ENCODE measurements at regions of chr5 and their contacts with region 1.

Region 1: GRCh38 chr5:154754460-154755360 is 467 bp upstream of the LARP1 start:
- DNase-seq: peak; percentile 97
- ATAC-seq: peak; percentile 88
- H3K4me3 Mint-ChIP-seq: peak overlapping the region; percentile 82
- H3K27ac Mint-ChIP-seq: peak overlapping the region; percentile 93
- H3K4me1 Mint-ChIP-seq: peaks cover 44% of the 10 kb centered on the region
- H3K27me3 Mint-ChIP-seq: no peaks in the 10 kb centered on the region
- CTCF ChIP-seq: no peak

Region 2: GRCh38 chr5:154038707-154039457 is 715.8 kb before region 1 on chr5 and contains the starts of genes FAM114A2 and MFAP3:
- CTCF ChIA-PET with region 1: no interaction called
- POLR2A ChIA-PET with region 1: no interaction called
- intact Hi-C with region 1: loop called (anchors 2 kb)
- DNase-seq: peak; percentile 77
- ATAC-seq: peak; percentile 98
- H3K4me3 Mint-ChIP-seq: peak within 1 kb of the TSS; percentile 97
- H3K27ac Mint-ChIP-seq: peak within 1 kb of the TSS; percentile 96
- H3K4me1 Mint-ChIP-seq: peaks cover 45% of the 10 kb centered on the region
- H3K27me3 Mint-ChIP-seq: no peaks in the 10 kb centered on the region
- CTCF ChIP-seq: no peak
- total RNA-seq, gene FAM114A2: 27.4 and 30.5 TPM in 2 replicates
- total RNA-seq, gene MFAP3: 18.4 and 20.8 TPM in 2 replicates

Region 3: DNA sequence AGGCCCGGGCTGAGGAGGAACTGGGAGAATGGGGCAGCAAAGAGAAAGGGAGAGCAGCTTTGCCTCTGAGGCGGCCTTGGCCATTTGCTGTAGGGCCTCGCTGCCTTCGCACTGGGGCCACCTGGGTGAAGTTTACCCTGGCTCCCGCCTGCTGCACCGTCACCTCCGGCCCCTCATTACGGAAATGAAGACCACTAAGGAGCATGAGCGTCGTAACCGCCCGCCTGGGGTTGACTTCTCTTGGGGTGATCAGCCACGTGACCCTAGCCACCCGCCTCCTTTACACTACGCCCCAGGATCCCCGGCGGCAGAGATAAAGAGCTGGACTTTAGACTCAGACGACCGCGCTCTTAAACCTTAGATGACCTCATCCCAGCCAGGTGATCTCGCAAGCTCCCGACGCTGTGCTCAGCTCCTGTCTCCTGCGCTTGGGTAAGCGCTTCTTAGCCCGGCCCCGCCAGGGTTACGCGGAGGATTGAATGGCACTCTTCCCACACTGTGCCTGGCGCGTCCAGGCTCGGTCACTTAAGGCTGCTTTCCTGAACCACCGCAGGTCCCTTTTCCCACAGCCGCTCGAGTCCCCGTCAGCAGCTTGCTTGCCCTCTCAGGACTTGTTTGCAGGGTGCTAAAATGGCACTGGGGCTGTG is 107.5 kb before region 1 on chr5:
- CTCF ChIA-PET with region 1: interaction called, 3 read pairs
- POLR2A ChIA-PET with region 1: no interaction called
- intact Hi-C with region 1: loop called (anchors 2 kb)
- DNase-seq: no peak
- ATAC-seq: peak; percentile 58
- H3K4me3 Mint-ChIP-seq: peak overlapping the region; percentile 87
- H3K27ac Mint-ChIP-seq: no peak overlapping the region
- H3K4me1 Mint-ChIP-seq: peaks cover 16% of the 10 kb centered on the region
- H3K27me3 Mint-ChIP-seq: peaks cover 12% of the 10 kb centered on the region
- CTCF ChIP-seq: no peak

Region 4: DNA sequence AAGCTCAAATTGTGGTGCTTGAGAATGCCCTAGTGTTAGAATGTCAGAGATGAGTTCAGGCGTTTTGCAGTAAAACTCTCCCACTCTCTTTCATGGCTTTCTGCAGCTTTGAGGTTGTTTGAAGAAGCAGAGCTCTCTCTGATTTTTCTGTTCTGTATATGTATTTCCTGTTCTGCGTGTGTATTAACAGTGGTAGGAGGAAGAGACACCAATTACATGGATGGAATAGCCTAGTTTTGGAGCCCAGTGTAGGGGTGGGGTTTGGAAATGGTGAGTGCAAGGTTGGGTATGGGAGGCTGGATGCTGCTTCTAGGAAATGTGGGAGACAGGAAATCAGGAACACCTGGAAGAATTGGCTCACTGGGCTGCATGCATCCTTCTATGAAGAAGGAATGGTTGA is 12.9 kb after region 1 on chr5:
- CTCF ChIA-PET with region 1: no interaction called
- POLR2A ChIA-PET with region 1: interaction called, 5 read pairs
- intact Hi-C with region 1: loop called (anchors 1 kb)
- DNase-seq: no peak
- ATAC-seq: peak; percentile 25
- H3K4me3 Mint-ChIP-seq: peak overlapping the region; percentile 36
- H3K27ac Mint-ChIP-seq: peak overlapping the region; percentile 37
- H3K4me1 Mint-ChIP-seq: peaks cover 76% of the 10 kb centered on the region
- H3K27me3 Mint-ChIP-seq: no peaks in the 10 kb centered on the region
- CTCF ChIP-seq: no peak

Region 5: DNA sequence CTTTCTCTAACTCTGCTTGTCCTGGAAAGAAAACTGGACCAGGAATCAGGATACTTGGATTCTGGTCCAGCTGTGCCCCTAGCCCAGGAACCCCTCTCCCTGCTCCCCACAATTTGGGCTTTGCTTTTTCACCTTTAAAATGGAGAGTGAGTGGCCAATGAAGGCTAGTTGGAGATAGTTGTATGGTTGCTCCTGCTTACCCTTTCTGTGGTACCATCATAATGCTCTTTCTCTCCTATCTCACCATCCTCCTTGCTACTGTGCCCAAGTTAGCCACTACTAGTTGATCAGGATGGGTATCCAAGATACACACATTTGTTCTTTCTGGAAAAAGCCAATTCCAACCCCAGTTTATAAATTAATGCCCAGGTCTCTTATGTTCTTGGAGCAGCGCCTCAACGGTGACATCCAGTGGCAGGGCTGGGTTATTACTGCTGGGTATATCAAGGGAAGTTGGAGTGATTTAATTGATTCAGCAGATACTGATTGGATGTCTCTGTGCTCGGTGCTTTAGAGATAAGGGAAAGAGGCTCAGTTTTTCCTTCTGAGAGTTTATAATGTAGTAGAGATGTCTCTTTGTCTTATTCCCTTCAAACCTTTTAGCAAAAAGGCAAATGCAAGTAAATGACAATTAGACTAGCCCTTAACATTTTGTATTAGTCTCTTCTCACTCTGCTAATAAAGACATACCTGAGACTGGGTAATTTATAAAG is 57.1 kb after region 1 on chr5:
- CTCF ChIA-PET with region 1: interaction called, 3 read pairs
- POLR2A ChIA-PET with region 1: no interaction called
- intact Hi-C with region 1: loop called (anchors 1 kb)
- DNase-seq: peak; percentile 32
- ATAC-seq: peak; percentile 88
- H3K4me3 Mint-ChIP-seq: no peak overlapping the region
- H3K27ac Mint-ChIP-seq: no peak overlapping the region
- H3K4me1 Mint-ChIP-seq: peaks cover 26% of the 10 kb centered on the region
- H3K27me3 Mint-ChIP-seq: no peaks in the 10 kb centered on the region
- CTCF ChIP-seq: peak; percentile 95

Region 6: GRCh38 chr5:154940772-154941620 is 186.3 kb after region 1 on chr5 and contains the start of gene MRPL22:
- CTCF ChIA-PET with region 1: no interaction called
- POLR2A ChIA-PET with region 1: no interaction called
- intact Hi-C with region 1: loop called (anchors 1 kb)
- DNase-seq: peak; percentile 88
- ATAC-seq: peak; percentile 63
- H3K4me3 Mint-ChIP-seq: peak within 1 kb of the TSS; percentile 99
- H3K27ac Mint-ChIP-seq: peak within 1 kb of the TSS; percentile 97
- H3K4me1 Mint-ChIP-seq: peaks cover 49% of the 10 kb centered on the region
- H3K27me3 Mint-ChIP-seq: no peaks in the 10 kb centered on the region
- CTCF ChIP-seq: no peak
- total RNA-seq, gene MRPL22: 41.9 and 42.6 TPM in 2 replicates

Measured in activated B cell treated with CpG ODN at 0.5 μM for 24 hours (primary cell).